Sciatic nerve (tissue), 2 donors: ENCODE measurements at regions of chr3 and their contacts with region 1.

Region 1: GRCh38 chr3:48273594-48274211 is 32.8 kb downstream of the ZNF589 start:
- DNase-seq: no peak
- ATAC-seq: peak; percentile 52

Region 2: DNA sequence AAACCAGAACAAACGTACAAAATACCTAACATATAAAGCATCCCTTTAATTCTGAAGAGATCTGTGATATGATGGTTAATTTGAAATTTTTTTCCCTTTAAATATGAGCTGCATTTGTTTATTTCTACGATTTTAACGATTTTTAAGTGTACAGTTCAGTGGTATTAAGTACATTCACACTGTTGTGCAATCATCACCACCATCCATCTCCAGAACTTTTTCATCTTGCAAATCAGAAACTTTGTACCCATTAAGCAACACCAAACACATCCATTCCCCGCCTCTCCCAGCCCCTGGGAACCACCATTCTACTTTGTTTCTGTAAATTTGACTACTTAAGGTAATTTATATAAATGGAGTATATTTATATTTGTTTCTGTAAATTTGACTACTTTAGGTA is 309.0 kb before region 1 on chr3:
- intact Hi-C with region 1: no loop called
- DNase-seq: no peak
- ATAC-seq: no peak

Region 3: DNA sequence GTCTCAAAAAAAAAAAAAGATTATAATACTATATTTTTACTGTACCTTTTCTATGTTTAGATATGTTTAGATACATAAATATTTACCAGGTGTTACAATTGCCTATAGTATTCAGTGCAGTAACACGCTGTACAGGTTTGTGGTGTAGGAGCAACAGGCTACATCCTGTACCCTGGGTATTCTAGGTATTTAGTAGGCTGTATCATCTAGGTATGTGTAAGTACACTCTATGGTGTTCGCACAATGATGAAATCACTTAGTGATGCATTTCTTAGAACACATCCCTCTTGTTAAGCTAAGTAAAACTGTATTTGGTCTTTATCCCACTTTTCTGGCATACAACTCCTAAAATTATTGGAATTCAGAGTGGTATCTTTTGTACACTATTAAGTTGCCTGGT is 163.2 kb before region 1 on chr3:
- intact Hi-C with region 1: no loop called
- DNase-seq: no peak
- ATAC-seq: no peak

Region 4: DNA sequence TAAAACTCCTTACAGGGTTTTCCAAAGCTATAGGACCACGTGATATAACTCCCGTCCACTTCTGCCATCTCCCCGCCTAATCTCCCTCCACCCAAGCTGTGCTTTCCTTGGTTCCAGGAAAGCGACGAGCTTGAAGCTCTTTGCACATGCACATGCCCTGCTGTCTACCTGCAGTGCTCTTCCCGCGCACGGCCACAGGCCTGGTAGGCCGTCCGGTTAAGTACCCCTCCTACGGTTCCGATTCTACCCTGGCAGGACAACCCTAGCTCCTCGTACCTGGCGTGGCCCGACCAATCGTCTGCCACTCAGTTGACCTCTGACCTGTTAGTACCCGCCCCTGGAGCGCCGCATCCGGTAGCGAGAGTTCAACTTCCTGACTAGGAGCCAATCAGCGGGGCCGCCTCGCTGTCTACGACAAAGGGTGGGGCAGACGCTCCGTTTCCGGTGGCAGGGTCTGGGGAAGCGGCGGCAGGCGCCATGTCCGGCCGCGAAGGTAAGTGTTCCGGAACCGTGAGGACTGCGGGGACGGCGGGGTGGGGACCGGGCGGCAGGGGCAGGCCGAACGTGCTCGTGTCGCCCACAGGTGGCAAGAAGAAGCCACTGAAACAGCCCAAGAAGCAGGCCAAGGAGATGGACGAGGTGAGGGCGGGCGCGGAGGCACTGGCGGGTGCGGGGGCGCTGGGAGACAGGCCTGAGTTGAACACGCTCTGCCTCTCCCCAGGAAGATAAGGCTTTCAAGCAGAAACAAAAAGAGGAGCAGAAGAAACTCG is 166.3 kb after region 1 on chr3 and contains the starts of genes CCDC51 and TMA7:
- intact Hi-C with region 1: loop called (anchors 10 kb)
- DNase-seq: peak; percentile 99
- ATAC-seq: peak; percentile 99
- total RNA-seq, gene CCDC51: 10.6 TPM
- total RNA-seq, gene TMA7: 154 TPM